Dorsolateral prefrontal cortex (tissue), 120 donors: ENCODE measurements at regions of chr7 and their contacts with region 1.

Region 1: GRCh38 chr7:105013221-105013815 is 687 bp upstream of the KMT2E start:
- DNase-seq: peak; percentile 93 to 98 (median 96)
- H3K4me3 ChIP-seq: peak overlapping the region; percentile 69 to 99 (median 92)
- H3K27ac ChIP-seq: peak overlapping the region; percentile 99 to 100 (median 100)
- H3K27me3 ChIP-seq: no peaks in the 10 kb centered on the region
- CTCF ChIP-seq: peak in 42 of 56 donors; percentile 4 to 54 (median 31)

Region 2: GRCh38 chr7:105097619-105098018 is 84.3 kb after region 1 on chr7:
- intact Hi-C with region 1: loop called in 1 of 2 experiments (anchors 10 kb)
- DNase-seq: no peak
- H3K4me3 ChIP-seq: no peak overlapping the region
- H3K27ac ChIP-seq: peak overlapping the region in 5 of 59 donors; percentile 6 to 21 (median 14)
- H3K27me3 ChIP-seq: no peaks in the 10 kb centered on the region
- CTCF ChIP-seq: no peak

Region 3: DNA sequence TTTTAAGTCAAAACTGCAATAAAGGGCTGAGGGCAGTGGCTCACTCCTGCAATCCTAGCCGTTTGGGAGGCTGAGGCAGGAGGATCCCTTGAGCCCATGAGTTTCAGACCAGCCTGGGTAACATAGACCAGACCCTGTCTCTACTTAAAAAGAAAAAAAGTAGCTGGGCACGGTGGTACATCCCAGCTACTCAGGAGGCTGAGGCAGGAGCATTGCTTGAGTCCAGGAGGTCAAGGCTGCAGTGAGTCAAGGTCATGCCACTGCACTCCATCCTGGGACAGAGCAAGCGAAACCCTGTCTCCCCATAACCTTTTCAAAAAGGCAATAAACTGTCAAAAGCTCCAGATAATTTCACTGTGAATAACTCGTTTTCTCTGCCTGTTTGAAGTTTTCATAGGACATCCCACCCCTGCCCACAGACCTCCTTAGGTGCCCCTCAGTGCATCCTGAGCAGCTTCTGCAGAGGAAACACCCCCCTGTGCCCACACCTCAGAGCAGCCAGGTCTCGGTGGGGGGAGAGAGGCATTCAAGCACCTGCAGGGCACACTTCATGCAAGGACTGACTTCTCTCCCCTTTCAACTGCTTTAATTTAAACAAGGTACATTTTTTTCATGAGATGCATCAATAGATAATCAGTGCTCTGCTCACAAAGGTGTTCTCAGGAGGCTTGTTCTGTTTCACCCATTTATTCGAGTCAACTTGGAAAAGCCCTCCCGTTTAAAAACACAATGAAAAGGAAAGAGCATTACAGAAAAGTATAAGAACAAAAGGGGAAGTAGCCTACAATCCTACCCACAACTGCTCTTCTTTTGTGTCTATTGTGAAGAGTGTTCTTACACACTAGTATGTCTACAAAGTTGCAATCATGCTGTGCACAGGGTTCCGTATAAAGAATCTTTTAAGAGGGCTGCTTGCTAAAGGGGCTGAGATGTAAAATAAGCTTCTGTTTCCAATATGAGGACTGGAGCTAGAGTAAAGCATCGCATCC is 105.6 kb after region 1 on chr7:
- intact Hi-C with region 1: loop called in 1 of 2 experiments (anchors 10 kb)
- DNase-seq: no peak
- H3K4me3 ChIP-seq: no peak overlapping the region
- H3K27ac ChIP-seq: peak overlapping the region in 35 of 59 donors; percentile 0 to 57 (median 24)
- H3K27me3 ChIP-seq: no peaks in the 10 kb centered on the region
- CTCF ChIP-seq: no peak

Region 4: DNA sequence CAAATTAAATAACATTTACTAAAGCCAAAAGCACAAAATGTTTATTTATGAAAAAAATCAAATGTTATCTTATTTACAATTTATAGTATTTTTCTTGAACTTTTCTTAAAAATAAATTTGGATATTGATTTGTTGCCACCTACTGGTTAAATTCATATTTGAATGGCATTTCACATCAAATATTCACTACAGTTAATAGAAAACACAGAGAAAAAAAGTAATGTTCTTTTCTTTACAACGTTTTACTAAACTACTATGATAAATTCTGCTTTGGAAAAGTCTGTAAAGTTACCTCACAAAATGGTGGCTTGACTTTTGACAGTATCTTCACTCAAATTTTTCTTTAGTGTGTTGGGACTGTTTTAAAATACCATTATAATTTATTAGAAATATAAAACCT is 322.7 kb after region 1 on chr7:
- intact Hi-C with region 1: loop called in 1 of 2 experiments (anchors 10 kb)
- DNase-seq: no peak
- H3K4me3 ChIP-seq: no peak overlapping the region
- H3K27ac ChIP-seq: peak overlapping the region in 4 of 59 donors; percentile 12 to 29 (median 20)
- H3K27me3 ChIP-seq: no peaks in the 10 kb centered on the region
- CTCF ChIP-seq: peak; percentile 45 to 83 (median 62)